ENCODE measurements at regions of chr12 and their contacts with region 1.

Region 1: DNA sequence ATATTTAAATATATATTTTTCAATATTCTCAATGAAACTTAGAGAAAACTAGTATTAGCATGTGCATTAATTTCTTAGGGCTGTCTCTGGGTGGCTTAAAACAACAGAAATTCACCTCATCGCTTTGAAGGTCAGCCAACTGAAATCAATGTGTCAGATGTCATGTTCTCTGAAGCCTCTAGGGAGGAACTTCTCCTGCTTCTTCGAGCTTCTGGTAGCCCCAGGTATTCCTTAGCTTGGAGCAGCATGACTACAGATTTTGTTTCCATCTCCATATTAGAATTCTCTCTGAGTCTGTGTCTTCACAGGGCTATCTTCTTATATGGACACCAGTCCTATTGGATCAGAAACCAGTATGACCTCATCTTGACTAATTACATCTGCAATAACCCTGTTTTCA is 221.5 kb downstream of the PDZRN4 start:
- DNase-seq: no peak
- ATAC-seq: no peak
- H3K4me3 ChIP-seq: no peak overlapping the region
- H3K27ac ChIP-seq: no peak overlapping the region
- H3K4me1 ChIP-seq: no peaks in the 10 kb centered on the region
- H3K27me3 ChIP-seq: no peaks in the 10 kb centered on the region
- CTCF ChIP-seq: no peak
- POLR2A ChIP-seq: no peak

Region 2: GRCh38 chr12:41521872-41522379 is 112.3 kb after region 1 on chr12:
- in situ Hi-C with region 1: no loop called
- intact Hi-C with region 1: no loop called
- DNase-seq: no peak
- ATAC-seq: peak in 1 of 2 donors; percentile 68
- H3K4me3 ChIP-seq: peak overlapping the region in 1 of 4 donors; percentile 20
- H3K27ac ChIP-seq: peak overlapping the region; percentile 5 to 26 (median 18)
- H3K4me1 ChIP-seq: peaks cover 0 to 13% of the 10 kb centered on the region in 2 donors
- H3K27me3 ChIP-seq: no peaks in the 10 kb centered on the region
- CTCF ChIP-seq: no peak
- POLR2A ChIP-seq: no peak

Region 3: DNA sequence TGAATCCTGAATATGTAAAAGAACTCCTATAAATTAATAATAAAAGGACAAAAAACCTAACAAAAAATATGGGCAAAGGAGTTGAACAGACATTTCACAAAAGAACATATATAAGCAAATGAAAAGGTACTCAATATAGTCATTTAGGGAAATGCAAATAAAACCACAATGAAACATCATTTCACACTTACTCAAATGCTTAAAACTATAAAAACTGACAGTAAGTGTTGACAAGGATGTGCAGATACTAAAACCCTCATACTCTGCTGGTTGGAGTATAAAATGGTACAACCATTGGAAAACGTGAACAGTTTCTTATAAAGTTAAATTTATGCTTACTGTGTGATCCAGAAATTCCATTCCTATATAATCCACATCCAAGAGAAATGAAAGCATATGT is 488.0 kb after region 1 on chr12:
- in situ Hi-C with region 1: no loop called
- intact Hi-C with region 1: loop called (anchors 5 kb)
- DNase-seq: no peak
- ATAC-seq: no peak
- H3K4me3 ChIP-seq: no peak overlapping the region
- H3K27ac ChIP-seq: no peak overlapping the region
- H3K4me1 ChIP-seq: no peaks in the 10 kb centered on the region
- H3K27me3 ChIP-seq: no peaks in the 10 kb centered on the region
- CTCF ChIP-seq: no peak
- POLR2A ChIP-seq: no peak